A549 (cell line): ENCODE measurements at regions of chr18 and their contacts with region 1.

Region 1: DNA sequence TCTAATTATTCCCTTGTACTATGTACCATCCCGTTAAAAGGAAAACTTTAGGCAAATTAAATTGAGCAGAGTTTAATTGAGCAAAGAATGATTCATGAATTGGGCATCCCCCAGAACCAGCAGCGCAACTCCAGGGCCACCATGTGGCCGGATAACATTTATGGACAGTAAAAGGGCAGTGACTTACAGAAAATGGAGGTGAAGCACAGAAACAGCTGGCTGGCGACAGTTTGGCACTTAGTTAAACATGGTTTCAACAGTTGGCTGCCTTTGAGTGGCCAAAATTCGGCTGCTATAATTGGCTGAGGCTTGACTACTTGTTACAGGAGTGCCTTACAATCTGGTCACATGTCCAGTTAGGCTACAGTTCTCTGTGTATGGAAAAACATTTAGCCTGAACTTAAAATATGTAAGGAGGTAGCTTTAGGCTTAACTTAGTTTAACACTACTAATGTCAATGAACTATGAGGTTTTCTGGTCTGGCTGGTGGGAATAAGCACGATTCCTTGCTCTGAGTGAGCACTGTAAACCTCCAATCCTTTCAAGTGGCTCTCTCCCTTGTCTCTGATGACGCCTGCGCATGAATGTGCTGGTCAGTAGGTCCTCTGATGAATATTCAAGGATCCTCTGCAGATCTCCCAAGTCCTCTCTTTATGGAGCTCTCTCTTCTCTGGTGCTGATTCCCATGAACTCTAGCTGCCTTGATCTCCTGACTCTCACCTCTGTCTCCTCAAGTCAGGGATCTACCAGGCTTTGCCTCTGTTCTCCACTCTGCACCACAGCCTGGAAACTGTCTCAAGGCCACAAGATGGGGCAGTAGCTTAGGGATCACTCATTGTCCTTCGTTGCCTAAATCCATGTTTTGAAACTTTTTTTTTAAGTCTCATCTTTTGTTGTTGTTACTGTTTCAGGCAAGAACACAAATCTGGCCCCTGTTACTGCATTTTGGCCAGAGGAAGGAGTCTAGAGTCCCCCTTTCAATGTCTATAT is 24.4 kb upstream of the RAB31 start:
- DNase-seq: peak in 1 of 2 experiments; percentile 83
- ATAC-seq: peak; percentile 92 to 97
- H3K4me3 ChIP-seq: no peak overlapping the region
- H3K27ac ChIP-seq: peak overlapping the region; percentile 67 to 76
- H3K4me1 ChIP-seq: peaks cover 24% of the 10 kb centered on the region
- CTCF ChIP-seq: peak; percentile 59
- EP300 ChIP-seq: no peak
- POLR2A ChIP-seq: no peak
- RAD21 ChIP-seq: peak; percentile 76 to 86

Region 2: DNA sequence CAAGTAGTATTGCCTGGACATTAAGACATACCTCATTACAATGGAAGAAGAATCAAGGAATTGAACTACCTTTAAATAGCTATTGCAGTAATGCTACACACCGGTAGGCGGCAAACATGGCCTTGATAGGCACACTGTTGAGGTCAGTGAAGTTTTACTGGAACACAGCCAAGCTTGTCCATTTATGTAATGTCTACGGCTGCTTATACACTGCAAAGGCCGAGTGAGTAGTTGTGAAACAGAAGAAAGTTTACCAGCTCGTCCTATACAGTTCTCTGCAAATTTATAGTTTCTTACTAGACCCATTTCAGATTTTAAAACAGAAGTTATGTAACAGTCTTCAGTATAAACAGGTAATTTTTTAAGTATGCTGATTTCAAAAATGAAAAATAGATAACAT is 108.1 kb before region 1 on chr18:
- CTCF ChIA-PET with region 1: interaction called, 43 read pairs
- POLR2A ChIA-PET with region 1: no interaction called
- DNase-seq: peak; percentile 44 to 95
- ATAC-seq: peak; percentile 97
- H3K4me3 ChIP-seq: no peak overlapping the region
- H3K27ac ChIP-seq: peak overlapping the region; percentile 12 to 64; a peak in 3 of 6 replicates
- H3K4me1 ChIP-seq: peaks cover 28% of the 10 kb centered on the region
- CTCF ChIP-seq: peak; percentile 64
- EP300 ChIP-seq: no peak
- POLR2A ChIP-seq: no peak
- RAD21 ChIP-seq: peak; percentile 82 to 90

Region 3: GRCh38 chr18:9749611-9750511 is 66.2 kb after region 1 on chr18:
- CTCF ChIA-PET with region 1: no interaction called
- POLR2A ChIA-PET with region 1: no interaction called
- DNase-seq: no peak
- ATAC-seq: no peak
- H3K4me3 ChIP-seq: no peak overlapping the region
- H3K27ac ChIP-seq: peak overlapping the region in 1 of 2 experiments; percentile 50; a peak in 2 of 6 replicates
- H3K4me1 ChIP-seq: peaks cover 20% of the 10 kb centered on the region
- CTCF ChIP-seq: no peak
- EP300 ChIP-seq: no peak
- POLR2A ChIP-seq: no peak
- RAD21 ChIP-seq: no peak

Region 4: DNA sequence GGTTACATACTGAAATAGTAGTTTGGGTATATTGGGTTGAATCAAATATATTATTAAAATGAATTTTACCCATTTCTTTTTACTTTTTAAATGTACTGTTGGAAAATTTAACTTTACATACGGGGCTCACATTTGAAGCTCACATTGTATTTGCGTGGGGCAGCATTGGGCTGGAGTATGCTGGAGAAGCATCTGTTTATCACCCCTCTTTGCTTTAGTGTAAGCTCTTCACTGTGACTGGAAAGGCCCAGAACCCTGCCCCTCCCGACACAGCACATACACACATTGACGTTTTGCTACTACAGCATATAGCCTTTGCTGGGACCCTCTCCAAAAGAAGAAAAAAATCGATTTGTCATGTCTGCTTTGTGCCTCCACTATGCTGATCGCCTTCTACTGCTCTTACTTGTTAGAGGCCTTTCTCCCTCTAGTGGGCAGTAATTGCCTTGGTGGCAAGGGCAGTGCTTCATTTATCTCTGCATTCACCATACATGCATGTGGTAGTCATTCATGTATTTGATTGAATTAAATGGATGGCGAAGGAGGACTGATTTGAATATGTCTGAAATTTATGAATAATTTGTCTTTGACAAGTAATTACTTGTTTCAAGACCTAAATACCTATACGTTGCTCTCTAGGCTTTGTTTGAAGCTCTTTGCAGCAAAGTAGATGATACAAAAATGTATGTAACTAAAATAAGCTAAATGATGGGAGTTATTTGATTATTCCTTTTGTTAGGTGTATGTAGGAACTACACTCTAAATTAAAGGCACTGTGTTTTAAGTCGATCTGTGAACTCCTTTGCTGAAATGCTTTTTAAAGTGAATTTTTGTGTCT is 267.5 kb after region 1 on chr18:
- CTCF ChIA-PET with region 1: interaction called, 16 read pairs
- POLR2A ChIA-PET with region 1: no interaction called
- DNase-seq: peak; percentile 25 to 74
- ATAC-seq: peak; percentile 85 to 92
- H3K4me3 ChIP-seq: no peak overlapping the region
- H3K27ac ChIP-seq: peak overlapping the region; percentile 60 to 79; a peak in 5 of 6 replicates
- H3K4me1 ChIP-seq: peaks cover 54% of the 10 kb centered on the region
- CTCF ChIP-seq: peak; percentile 58
- EP300 ChIP-seq: no peak
- POLR2A ChIP-seq: no peak
- RAD21 ChIP-seq: peak; percentile 66 to 70; a peak in 4 of 5 replicates